ENCODE measurements at regions of chr7 and their contacts with region 1.

Region 1: GRCh38 chr7:43582503-43583423 is at the start of gene STK17A:
- DNase-seq: peak; percentile 96
- ATAC-seq: peak; percentile 98
- H3K4me3 ChIP-seq: peak within 1 kb of the TSS; percentile 66
- H3K27ac ChIP-seq: peak within 1 kb of the TSS; percentile 93
- H3K4me1 ChIP-seq: peaks cover 10% of the 10 kb centered on the region
- H3K27me3 ChIP-seq: no peaks in the 10 kb centered on the region
- CTCF ChIP-seq: peak; percentile 91
- total RNA-seq, gene STK17A: 35.4 TPM

Region 2: DNA sequence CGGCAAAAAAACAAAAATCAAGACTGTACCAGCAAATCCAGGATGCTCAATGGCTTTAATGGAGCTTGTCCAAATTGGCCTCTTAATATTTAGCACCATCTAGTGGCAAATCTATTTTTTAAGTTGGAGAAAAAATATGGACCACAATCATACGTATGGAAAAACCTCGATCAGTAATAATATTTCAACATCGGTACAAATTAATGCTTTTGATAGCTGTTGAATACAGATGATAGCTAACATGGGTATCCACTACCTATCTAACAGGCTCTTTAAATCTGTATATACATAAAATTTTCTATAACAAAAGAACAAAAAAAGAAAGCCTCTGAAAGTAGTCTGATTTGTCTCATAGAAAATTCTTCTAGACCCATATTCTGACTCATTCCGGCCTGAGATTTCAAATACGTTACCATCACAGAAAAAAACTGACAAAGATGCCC is 117.3 kb after region 1 on chr7:
- intact Hi-C with region 1: loop called (anchors 5 kb)
- DNase-seq: no peak
- ATAC-seq: peak; percentile 83
- H3K4me3 ChIP-seq: no peak overlapping the region
- H3K27ac ChIP-seq: no peak overlapping the region
- H3K4me1 ChIP-seq: no peaks in the 10 kb centered on the region
- H3K27me3 ChIP-seq: no peaks in the 10 kb centered on the region
- CTCF ChIP-seq: peak; percentile 72

Measured in upper lobe of right lung (tissue), 1 donor.